Heart right ventricle (tissue), 16 donors: ENCODE measurements at regions of chr1 and their contacts with region 1.

Region 1: DNA sequence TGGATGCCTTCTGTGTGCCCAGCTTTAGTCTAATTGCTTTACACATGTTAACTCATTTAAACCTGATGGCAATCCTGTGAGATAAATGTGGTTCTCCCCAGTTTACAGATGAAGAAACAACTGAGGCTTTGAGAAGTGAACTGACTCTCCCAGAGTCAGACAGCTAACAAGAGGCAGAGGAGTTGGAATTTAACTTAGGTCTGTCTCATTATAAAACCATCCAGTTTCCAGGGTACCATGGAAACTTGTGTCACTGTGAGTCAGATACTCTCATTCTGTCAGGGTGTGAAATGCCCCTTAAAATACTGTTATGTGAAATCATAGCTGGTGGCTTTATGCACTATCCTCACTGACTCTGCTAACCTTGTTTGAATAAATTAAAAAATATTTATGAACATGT is 206.6 kb downstream of the PBX1 start:
- DNase-seq: no peak
- ATAC-seq: peak in 3 of 8 donors; percentile 33 to 69 (median 36)
- H3K4me3 ChIP-seq: no peak overlapping the region
- H3K27ac ChIP-seq: peak overlapping the region in 8 of 10 donors; percentile 30 to 63 (median 42)
- H3K4me1 ChIP-seq: peaks cover 0 to 69% (median 50%) of the 10 kb centered on the region in 9 donors
- H3K27me3 ChIP-seq: no peaks in the 10 kb centered on the region
- CTCF ChIP-seq: no peak

Region 2: DNA sequence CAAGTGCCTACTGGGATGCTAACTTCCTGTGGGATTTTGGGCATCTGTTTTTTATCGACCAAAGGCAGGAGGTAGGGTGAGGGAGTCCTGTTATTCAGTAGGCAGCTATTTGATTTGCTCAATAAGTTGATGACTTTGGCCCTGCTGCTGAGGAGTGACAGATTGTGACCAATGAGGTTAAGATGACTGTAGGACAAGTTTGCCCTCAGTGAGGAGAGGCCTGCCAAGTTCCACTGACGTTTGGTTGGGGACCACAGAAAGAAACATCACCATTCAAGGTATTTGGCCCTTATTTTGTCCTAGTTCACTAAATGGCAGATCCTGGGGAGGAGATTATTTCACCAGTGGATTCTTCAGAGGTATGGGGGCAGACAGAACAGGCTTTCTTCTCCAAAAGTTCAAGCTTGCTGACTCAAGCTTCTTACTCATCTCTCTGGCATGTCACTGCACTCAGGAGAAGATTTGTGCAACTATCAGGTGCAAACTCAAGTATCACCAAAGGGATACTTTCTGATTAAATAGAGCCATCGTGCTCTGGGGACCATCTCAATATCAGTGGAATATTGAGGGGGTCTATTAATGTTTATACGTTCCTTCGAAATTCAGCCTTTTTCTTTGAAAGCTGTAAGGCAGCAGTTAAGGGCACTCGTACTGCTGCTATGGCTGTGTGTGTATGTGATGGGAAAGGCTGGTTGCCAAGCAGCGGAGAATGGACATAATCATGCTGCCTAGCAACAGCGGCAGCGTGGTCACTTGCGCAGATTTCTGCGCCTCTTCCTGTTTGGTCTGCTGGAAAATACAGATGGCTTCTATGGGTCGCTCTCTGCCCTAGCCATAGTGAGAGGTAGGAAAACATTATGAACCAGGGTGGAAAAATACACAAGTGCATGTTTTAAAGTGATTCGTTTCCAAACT is 127.8 kb before region 1 on chr1:
- intact Hi-C with region 1: loop called in 1 of 10 experiments (anchors 5 kb)
- DNase-seq: peak; percentile 47 to 68
- ATAC-seq: peak; percentile 45 to 86 (median 73)
- H3K4me3 ChIP-seq: peak overlapping the region in 1 of 10 donors; percentile 3
- H3K27ac ChIP-seq: peak overlapping the region; percentile 21 to 87 (median 78)
- H3K4me1 ChIP-seq: peaks cover 17 to 90% (median 65%) of the 10 kb centered on the region in 9 donors
- H3K27me3 ChIP-seq: no peaks in the 10 kb centered on the region
- CTCF ChIP-seq: no peak